GM12878 (cell line): ENCODE measurements at regions of chr11 and their contacts with region 1.

Region 1: GRCh38 chr11:119666463-119667131 is 62.4 kb downstream of the NECTIN1 start:
- DNase-seq: no peak
- ATAC-seq: peak; percentile 100
- H3K4me3 ChIP-seq: no peak overlapping the region
- H3K27ac ChIP-seq: no peak overlapping the region
- H3K4me1 ChIP-seq: no peaks in the 10 kb centered on the region
- H3K27me3 ChIP-seq: no peaks in the 10 kb centered on the region
- CTCF ChIP-seq: peak; percentile 91 to 98 (median 94); a peak in 5 of 6 replicates
- EP300 ChIP-seq: no peak
- POLR2A ChIP-seq: no peak
- RAD21 ChIP-seq: peak; percentile 95

Region 2: GRCh38 chr11:119481021-119481666 is 185.5 kb before region 1 on chr11:
- CTCF ChIA-PET with region 1: no interaction called
- POLR2A ChIA-PET with region 1: no interaction called
- RAD21 ChIA-PET with region 1: no interaction called
- SMC1A ChIA-PET with region 1: no interaction called
- in situ Hi-C with region 1: no loop called
- intact Hi-C with region 1: loop called (anchors 5 kb)
- DNase-seq: peak; percentile 31
- ATAC-seq: peak; percentile 89
- H3K4me3 ChIP-seq: no peak overlapping the region
- H3K27ac ChIP-seq: no peak overlapping the region
- H3K4me1 ChIP-seq: no peaks in the 10 kb centered on the region
- H3K27me3 ChIP-seq: no peaks in the 10 kb centered on the region; a peak in 1 of 4 replicates
- CTCF ChIP-seq: peak; percentile 91 to 99 (median 97)
- EP300 ChIP-seq: no peak
- POLR2A ChIP-seq: no peak
- RAD21 ChIP-seq: peak; percentile 93

Region 3: GRCh38 chr11:120013325-120014270 is 347.0 kb after region 1 on chr11:
- CTCF ChIA-PET with region 1: no interaction called
- POLR2A ChIA-PET with region 1: no interaction called
- RAD21 ChIA-PET with region 1: no interaction called
- SMC1A ChIA-PET with region 1: no interaction called
- in situ Hi-C with region 1: no loop called
- intact Hi-C with region 1: loop called (anchors 1 kb)
- DNase-seq: no peak
- ATAC-seq: peak; percentile 93
- H3K4me3 ChIP-seq: no peak overlapping the region
- H3K27ac ChIP-seq: no peak overlapping the region
- H3K4me1 ChIP-seq: no peaks in the 10 kb centered on the region
- H3K27me3 ChIP-seq: peaks cover 4 to 6% of the 10 kb centered on the region in 2 experiments
- CTCF ChIP-seq: peak; percentile 57 to 79 (median 69)
- EP300 ChIP-seq: no peak
- POLR2A ChIP-seq: no peak
- RAD21 ChIP-seq: peak; percentile 48